ENCODE measurements at regions of chr16 and their contacts with region 1.

Region 1: DNA sequence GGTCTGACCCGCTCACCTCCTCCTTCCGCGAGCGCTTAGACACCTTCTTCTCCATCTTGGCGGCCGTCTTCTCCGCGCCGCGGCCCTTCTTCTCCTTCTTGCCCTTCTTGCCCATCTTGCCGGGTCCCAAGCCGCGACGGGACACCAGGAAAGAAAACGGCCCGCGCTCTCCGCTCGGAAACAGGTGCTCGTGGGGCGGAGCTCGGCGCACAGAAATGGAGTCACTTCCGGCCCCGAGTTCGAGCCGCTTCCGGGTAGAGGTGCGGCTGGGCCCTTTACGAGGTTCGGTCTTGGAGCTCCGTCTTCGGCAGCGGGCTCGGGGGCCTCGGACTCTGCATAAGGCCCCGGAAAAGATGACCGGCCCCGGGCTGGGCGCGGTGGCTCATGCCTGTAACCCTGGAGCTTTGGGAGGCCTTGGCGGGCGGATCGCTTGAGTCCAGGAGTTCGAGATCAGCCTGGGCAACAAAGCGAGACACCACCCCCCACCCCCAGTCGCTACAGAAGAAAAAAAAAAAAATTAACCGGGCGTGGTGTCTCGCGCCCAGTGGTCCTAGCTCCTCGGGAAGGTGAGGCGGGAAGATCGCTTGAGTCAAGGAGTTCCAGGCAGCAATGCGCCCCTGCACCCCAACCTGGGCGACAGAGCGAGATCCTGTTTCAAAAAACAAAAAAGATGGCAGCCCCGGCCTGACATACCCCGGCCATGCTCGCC is at the start of gene KLHDC4:
- DNase-seq: peak; percentile 91
- H3K4me3 ChIP-seq: peak within 1 kb of the TSS; percentile 86
- H3K27ac ChIP-seq: peak within 1 kb of the TSS; percentile 75
- H3K4me1 ChIP-seq: peaks cover 62% of the 10 kb centered on the region
- CTCF ChIP-seq: no peak
- total RNA-seq, gene KLHDC4: 146 and 147 TPM in 2 replicates

Region 2: DNA sequence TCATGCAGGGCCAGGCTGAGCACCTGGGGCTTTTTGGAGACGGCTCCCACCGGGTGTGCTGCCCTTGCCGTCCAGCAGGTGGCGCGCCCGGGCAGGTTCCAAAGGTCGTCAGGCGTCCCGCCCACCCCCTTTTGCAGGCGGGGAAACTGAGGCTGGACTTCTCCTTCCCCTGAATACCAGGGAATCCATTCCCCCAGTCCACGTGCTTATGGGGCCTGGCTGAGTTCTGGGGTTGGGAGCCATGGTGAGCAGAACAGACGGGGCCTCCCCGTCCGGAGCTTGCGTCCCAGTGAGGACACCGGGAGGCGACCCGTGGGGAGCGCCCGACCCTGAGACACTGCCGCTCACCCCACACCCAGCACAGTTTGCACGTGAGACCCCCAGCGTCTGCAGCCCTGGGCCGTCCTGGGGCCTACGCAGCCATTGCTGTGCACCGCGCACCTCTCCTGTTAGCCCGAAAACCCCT is 215.4 kb before region 1 on chr16:
- CTCF ChIA-PET with region 1: no interaction called
- POLR2A ChIA-PET with region 1: no interaction called
- intact Hi-C with region 1: loop called (anchors 1 kb)
- DNase-seq: peak; percentile 41
- H3K4me3 ChIP-seq: no peak overlapping the region
- H3K27ac ChIP-seq: no peak overlapping the region
- H3K4me1 ChIP-seq: no peaks in the 10 kb centered on the region
- CTCF ChIP-seq: peak; percentile 93

Region 3: GRCh38 chr16:87723226-87723623 is 42.7 kb before region 1 on chr16:
- CTCF ChIA-PET with region 1: no interaction called
- POLR2A ChIA-PET with region 1: interaction called, 3 read pairs
- intact Hi-C with region 1: loop called (anchors 5 kb)
- DNase-seq: peak; percentile 97
- H3K4me3 ChIP-seq: peak overlapping the region; percentile 30
- H3K27ac ChIP-seq: peak overlapping the region; percentile 94
- H3K4me1 ChIP-seq: peaks cover 55% of the 10 kb centered on the region
- CTCF ChIP-seq: no peak

Measured in OCI-LY7 (cell line).